Pancreas (tissue), 10 donors: ENCODE measurements at regions of chr3 and their contacts with region 1.

Region 1: GRCh38 chr3:27712136-27713077 is 9.7 kb downstream of the EOMES start:
- DNase-seq: peak; percentile 65 to 87 (median 75)
- ATAC-seq: peak; percentile 92 to 97 (median 96)
- H3K4me3 ChIP-seq: peak overlapping the region; percentile 22 to 60 (median 41)
- H3K27ac ChIP-seq: no peak overlapping the region
- H3K4me1 ChIP-seq: peaks cover 0 to 14% (median 0%) of the 10 kb centered on the region in 3 donors
- H3K27me3 ChIP-seq: peaks cover 0 to 16% (median 8%) of the 10 kb centered on the region in 4 donors
- CTCF ChIP-seq: peak; percentile 42 to 75 (median 64)

Region 2: DNA sequence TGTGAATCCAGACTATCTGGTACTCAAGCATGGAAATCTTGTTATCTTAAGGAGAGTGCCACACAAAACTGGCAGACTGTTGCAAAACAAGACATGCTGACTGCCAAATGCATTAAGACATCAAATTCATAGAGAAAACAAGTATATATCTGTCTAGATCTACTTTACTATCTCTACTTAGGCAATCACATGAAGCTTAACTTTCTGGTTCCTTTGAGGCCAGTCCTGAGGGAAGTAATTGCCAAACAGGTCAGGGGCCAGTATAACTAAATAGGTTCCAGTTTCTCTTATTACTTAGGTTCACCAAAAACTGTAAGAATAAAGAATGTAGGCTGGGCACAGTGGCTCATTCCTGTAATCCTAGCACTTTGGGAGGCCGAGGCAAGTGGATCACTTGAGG is 212.4 kb before region 1 on chr3:
- intact Hi-C with region 1: no loop called
- DNase-seq: no peak
- ATAC-seq: no peak
- H3K4me3 ChIP-seq: no peak overlapping the region
- H3K27ac ChIP-seq: no peak overlapping the region
- H3K4me1 ChIP-seq: no peaks in the 10 kb centered on the region
- H3K27me3 ChIP-seq: no peaks in the 10 kb centered on the region
- CTCF ChIP-seq: no peak

Region 3: DNA sequence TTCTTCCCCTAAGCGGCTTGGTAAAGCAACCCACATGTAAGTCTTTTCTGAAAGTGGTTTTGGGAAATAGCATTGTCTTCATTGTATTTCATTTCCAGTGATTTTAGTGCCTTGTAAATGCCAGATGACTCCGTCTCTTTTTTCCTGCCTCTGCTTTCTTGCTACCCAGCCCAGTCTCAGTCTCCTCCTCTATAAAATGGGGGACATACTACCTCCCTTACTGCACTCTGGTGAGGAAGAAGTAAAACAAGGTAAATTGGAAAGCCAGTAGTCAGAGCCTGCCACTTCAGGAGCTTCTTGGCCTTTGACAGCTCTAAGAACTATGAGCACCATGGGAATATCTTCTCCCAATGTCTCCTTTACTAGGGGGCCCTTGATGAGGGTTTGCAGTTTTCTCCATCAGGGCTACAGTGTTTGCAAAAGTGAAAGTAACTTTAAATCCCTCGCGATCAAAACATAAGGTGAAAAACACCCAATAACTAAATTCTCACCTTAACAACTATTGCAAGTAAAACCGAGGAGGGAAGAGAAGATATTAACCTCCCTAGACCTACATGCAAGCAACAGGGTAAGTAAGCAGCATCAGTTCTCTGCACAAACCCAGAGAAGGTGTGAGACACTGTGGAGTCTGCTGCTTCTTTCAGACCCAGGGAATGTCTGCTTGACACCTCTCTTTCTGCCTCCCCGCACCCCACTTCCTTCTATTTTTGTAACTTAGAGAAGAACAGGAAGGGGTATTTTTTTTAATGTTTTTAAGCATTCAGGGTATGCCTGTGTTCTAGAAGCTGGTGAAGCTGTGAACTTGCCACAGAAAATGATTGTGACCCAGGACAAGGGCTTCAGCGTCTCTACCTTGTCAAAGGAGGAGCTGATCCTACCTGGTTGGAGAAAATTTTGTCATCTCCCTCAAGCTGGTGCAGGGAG is 168.8 kb after region 1 on chr3:
- intact Hi-C with region 1: loop called in 1 of 3 experiments (anchors 10 kb)
- DNase-seq: no peak
- ATAC-seq: no peak
- H3K4me3 ChIP-seq: no peak overlapping the region
- H3K27ac ChIP-seq: no peak overlapping the region
- H3K4me1 ChIP-seq: peaks cover 6 to 18% (median 17%) of the 10 kb centered on the region in 3 donors
- H3K27me3 ChIP-seq: no peaks in the 10 kb centered on the region
- CTCF ChIP-seq: no peak

Region 4: GRCh38 chr3:28328188-28329151 is 616.1 kb after region 1 on chr3:
- intact Hi-C with region 1: loop called (anchors 5 to 10 kb)
- DNase-seq: no peak
- ATAC-seq: peak; percentile 50 to 78 (median 72)
- H3K4me3 ChIP-seq: no peak overlapping the region
- H3K27ac ChIP-seq: no peak overlapping the region
- H3K4me1 ChIP-seq: peaks cover 0 to 3% (median 0%) of the 10 kb centered on the region in 3 donors
- H3K27me3 ChIP-seq: no peaks in the 10 kb centered on the region
- CTCF ChIP-seq: peak; percentile 40 to 60 (median 48)

Region 5: GRCh38 chr3:28334552-28334951 is 622.1 kb after region 1 on chr3:
- intact Hi-C with region 1: loop called (anchors 5 to 10 kb)
- DNase-seq: no peak
- ATAC-seq: no peak
- H3K4me3 ChIP-seq: no peak overlapping the region
- H3K27ac ChIP-seq: no peak overlapping the region
- H3K4me1 ChIP-seq: peaks cover 0 to 3% (median 0%) of the 10 kb centered on the region in 3 donors
- H3K27me3 ChIP-seq: no peaks in the 10 kb centered on the region
- CTCF ChIP-seq: no peak